ENCODE measurements at regions of chrX and their contacts with region 1.

Region 1: GRCh38 chrX:102863735-102864134 is 73.3 kb upstream of the RAB40AL start:
- DNase-seq: peak; percentile 86
- H3K4me3 ChIP-seq: no peak overlapping the region
- H3K27ac ChIP-seq: no peak overlapping the region
- H3K4me1 ChIP-seq: no peaks in the 10 kb centered on the region
- H3K27me3 ChIP-seq: no peaks in the 10 kb centered on the region
- CTCF ChIP-seq: peak; percentile 95

Region 2: GRCh38 chrX:102515975-102516941 is 347.5 kb before region 1 on chrX and contains the start of gene TMSB15A:
- CTCF ChIA-PET with region 1: no interaction called
- POLR2A ChIA-PET with region 1: no interaction called
- intact Hi-C with region 1: loop called (anchors 10 kb)
- DNase-seq: peak; percentile 80
- H3K4me3 ChIP-seq: peak within 1 kb of the TSS; percentile 48
- H3K27ac ChIP-seq: peak within 1 kb of the TSS; percentile 63
- H3K4me1 ChIP-seq: no peaks in the 10 kb centered on the region
- H3K27me3 ChIP-seq: no peaks in the 10 kb centered on the region
- CTCF ChIP-seq: no peak
- total RNA-seq, gene TMSB15A: 72.7 and 78.3 TPM in 2 replicates

Region 3: GRCh38 chrX:102728641-102729040 is 135.1 kb before region 1 on chrX:
- CTCF ChIA-PET with region 1: no interaction called
- POLR2A ChIA-PET with region 1: no interaction called
- intact Hi-C with region 1: loop called (anchors 5 kb)
- DNase-seq: no peak
- H3K4me3 ChIP-seq: no peak overlapping the region
- H3K27ac ChIP-seq: no peak overlapping the region
- H3K4me1 ChIP-seq: no peaks in the 10 kb centered on the region
- H3K27me3 ChIP-seq: no peaks in the 10 kb centered on the region
- CTCF ChIP-seq: no peak

Measured in A673 (cell line).